HCT116 (cell line): ENCODE measurements at regions of chr6 and their contacts with region 1.

Region 1: DNA sequence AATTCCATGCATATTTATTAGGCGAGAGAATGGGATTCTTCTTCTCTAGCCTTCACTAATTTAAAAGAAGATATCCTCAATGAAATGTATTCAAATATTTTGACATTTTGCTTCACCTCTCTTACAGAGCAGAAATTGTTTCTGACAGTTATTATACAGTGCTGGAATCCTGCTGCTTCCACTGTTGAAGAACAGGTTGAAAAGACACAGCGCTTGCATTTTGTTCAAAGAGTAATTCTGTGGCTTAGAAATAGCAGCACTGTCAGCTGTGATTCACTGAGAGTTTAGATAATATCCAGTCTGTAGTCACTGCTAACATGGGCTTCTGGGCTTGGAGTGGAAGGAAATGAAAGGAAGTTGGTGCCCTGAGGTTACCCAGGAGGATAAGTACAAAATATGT is 117.1 kb upstream of the FBXL4 start:
- DNase-seq: no peak
- ATAC-seq: no peak
- H3K4me3 ChIP-seq: no peak overlapping the region
- H3K27ac ChIP-seq: no peak overlapping the region
- H3K4me1 ChIP-seq: no peaks in the 10 kb centered on the region
- H3K27me3 ChIP-seq: peaks cover 71% of the 10 kb centered on the region
- CTCF ChIP-seq: no peak
- POLR2A ChIP-seq: no peak
- RAD21 ChIP-seq: no peak

Region 2: GRCh38 chr6:99047447-99047846 is 17.4 kb before region 1 on chr6:
- CTCF ChIA-PET with region 1: no interaction called
- POLR2A ChIA-PET with region 1: no interaction called
- RAD21 ChIA-PET with region 1: no interaction called
- intact Hi-C with region 1: loop called (anchors 1 kb)
- DNase-seq: no peak
- ATAC-seq: no peak
- H3K4me3 ChIP-seq: no peak overlapping the region
- H3K27ac ChIP-seq: no peak overlapping the region
- H3K4me1 ChIP-seq: no peaks in the 10 kb centered on the region
- H3K27me3 ChIP-seq: peaks cover 53% of the 10 kb centered on the region
- CTCF ChIP-seq: no peak
- POLR2A ChIP-seq: no peak
- RAD21 ChIP-seq: no peak